ENCODE measurements at regions of chr5 and their contacts with region 1.

Region 1: GRCh38 chr5:151223469-151224264 is at the start of gene CCDC69:
- DNase-seq: peak in 8 of 10 donors; percentile 26 to 69 (median 51)
- ATAC-seq: peak; percentile 64
- H3K4me3 Mint-ChIP-seq: peak within 1 kb of the TSS; percentile 82 to 96 (median 94)
- H3K27ac Mint-ChIP-seq: peak within 1 kb of the TSS; percentile 93 to 100 (median 96)
- H3K4me1 Mint-ChIP-seq: peaks cover 38 to 71% (median 57%) of the 10 kb centered on the region in 4 donors
- H3K27me3 Mint-ChIP-seq: no peaks in the 10 kb centered on the region
- polyA plus RNA-seq, gene CCDC69: 79.8 to 130 (median 98.1) TPM

Region 2: DNA sequence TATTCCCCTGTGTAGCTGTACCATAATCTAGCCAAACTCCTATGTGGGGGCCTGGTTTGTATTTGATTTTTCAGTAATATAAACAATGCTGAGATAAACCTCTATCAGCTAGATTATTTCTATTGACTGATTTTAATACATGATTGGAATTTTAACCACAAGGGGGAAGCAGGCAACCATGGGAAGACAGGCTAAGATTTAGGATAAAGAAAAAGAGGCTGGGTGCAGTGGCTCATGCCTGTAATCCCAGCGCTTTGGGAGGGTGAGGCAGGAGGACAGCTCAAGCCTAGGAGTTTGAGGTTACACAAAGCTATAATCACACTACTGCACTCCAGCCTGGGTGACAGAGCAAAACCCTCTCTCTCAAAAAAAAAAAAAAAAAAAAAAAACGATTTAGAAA is 221.4 kb before region 1 on chr5:
- POLR2A ChIA-PET with region 1: no interaction called
- DNase-seq: no peak
- ATAC-seq: no peak
- H3K4me3 Mint-ChIP-seq: no peak overlapping the region
- H3K27ac Mint-ChIP-seq: no peak overlapping the region
- H3K4me1 Mint-ChIP-seq: no peaks in the 10 kb centered on the region
- H3K27me3 Mint-ChIP-seq: peaks cover 0 to 8% (median 5%) of the 10 kb centered on the region in 5 donors

Region 3: GRCh38 chr5:151164686-151165392 is 58.8 kb before region 1 on chr5:
- POLR2A ChIA-PET with region 1: interaction called, 17 read pairs
- DNase-seq: peak; percentile 56 to 90 (median 82)
- ATAC-seq: peak; percentile 94 to 99
- H3K4me3 Mint-ChIP-seq: peak overlapping the region in 2 of 10 donors; percentile 3 to 14
- H3K27ac Mint-ChIP-seq: peak overlapping the region; percentile 11 to 85 (median 66)
- H3K4me1 Mint-ChIP-seq: peaks cover 14 to 37% (median 33%) of the 10 kb centered on the region in 4 donors
- H3K27me3 Mint-ChIP-seq: no peaks in the 10 kb centered on the region

Region 4: DNA sequence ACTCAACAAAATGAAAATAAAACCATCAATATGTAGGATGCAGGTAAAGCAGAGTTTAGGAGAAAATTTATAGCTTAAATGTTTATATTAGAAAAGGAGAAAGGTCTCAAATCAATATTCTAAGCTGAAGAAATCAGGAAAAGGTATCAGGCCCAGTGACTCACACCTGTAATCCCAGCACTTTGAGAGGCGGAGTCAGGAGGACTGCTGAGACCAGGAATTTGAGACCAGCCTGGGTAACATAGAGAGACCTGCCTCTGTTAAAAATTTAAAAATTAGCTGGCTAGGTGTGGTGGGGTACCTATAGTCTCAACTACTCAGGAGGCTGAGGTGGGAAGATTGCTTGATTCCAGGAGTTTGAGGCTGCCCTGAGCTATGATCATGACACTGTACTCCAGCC is 32.0 kb before region 1 on chr5:
- POLR2A ChIA-PET with region 1: interaction called, 28 read pairs
- DNase-seq: no peak
- ATAC-seq: no peak
- H3K4me3 Mint-ChIP-seq: peak overlapping the region in 7 of 10 donors; percentile 10 to 64 (median 20)
- H3K27ac Mint-ChIP-seq: peak overlapping the region; percentile 0 to 85 (median 55)
- H3K4me1 Mint-ChIP-seq: peaks cover 42 to 75% (median 69%) of the 10 kb centered on the region in 4 donors
- H3K27me3 Mint-ChIP-seq: no peaks in the 10 kb centered on the region

Region 5: GRCh38 chr5:151208481-151208914 is 15.2 kb before region 1 on chr5:
- POLR2A ChIA-PET with region 1: interaction called, 233 read pairs
- DNase-seq: no peak
- ATAC-seq: no peak
- H3K4me3 Mint-ChIP-seq: peak overlapping the region; percentile 8 to 88 (median 64)
- H3K27ac Mint-ChIP-seq: peak overlapping the region; percentile 91 to 100 (median 94)
- H3K4me1 Mint-ChIP-seq: peaks cover 36 to 79% (median 72%) of the 10 kb centered on the region in 4 donors
- H3K27me3 Mint-ChIP-seq: no peaks in the 10 kb centered on the region

Region 6: DNA sequence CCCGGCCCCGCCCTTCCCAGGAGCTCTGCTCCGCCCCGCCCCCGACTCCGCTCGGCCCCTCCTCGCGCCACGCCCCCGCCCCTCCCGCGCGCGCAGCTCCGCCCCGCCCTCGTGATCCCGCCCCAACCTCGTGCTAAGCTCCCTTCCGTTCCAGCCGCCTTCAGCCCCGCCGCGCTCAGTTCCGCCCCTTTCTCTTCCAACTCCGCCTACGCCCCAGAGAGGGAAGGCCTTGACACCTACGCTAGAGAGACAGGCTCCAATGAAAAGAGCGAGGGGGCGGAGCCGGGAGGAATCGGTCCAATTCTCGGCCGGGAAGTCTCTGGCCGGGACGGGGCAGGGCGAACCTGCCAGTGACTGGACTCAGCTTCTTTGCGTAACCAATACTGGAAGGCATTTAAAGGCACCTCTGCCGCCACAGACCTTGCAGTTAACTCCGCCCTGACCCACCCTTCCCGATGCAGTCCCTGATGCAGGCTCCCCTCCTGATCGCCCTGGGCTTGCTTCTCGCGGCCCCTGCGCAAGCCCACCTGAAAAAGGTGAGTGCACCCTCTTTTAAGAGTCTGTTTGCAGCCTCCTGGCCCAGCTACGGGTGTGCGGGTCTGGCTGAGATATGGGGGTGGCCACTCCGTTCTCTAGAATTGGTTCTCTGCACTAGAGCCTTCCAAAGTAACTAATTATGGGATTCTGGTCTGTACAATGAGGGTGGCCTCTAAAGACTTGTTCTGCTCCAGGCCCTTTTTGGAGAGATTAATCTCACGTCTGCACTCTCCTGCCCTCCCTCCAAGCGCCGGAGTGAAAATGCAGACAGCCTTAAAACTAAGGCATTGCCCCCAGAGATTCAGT is 29.3 kb after region 1 on chr5 and contains the start of gene GM2A:
- POLR2A ChIA-PET with region 1: interaction called, 22 read pairs
- DNase-seq: peak; percentile 90 to 99 (median 96)
- ATAC-seq: peak; percentile 95 to 99
- H3K4me3 Mint-ChIP-seq: peak within 1 kb of the TSS; percentile 75 to 95 (median 95)
- H3K27ac Mint-ChIP-seq: peak within 1 kb of the TSS; percentile 75 to 98 (median 92)
- H3K4me1 Mint-ChIP-seq: peaks cover 24 to 68% (median 45%) of the 10 kb centered on the region in 4 donors
- H3K27me3 Mint-ChIP-seq: no peaks in the 10 kb centered on the region
- polyA plus RNA-seq, gene GM2A: 3.8 to 6.5 (median 5.6) TPM